ENCODE measurements at regions of chr19 and their contacts with region 1.

Region 1: GRCh38 chr19:7348587-7349230 is at the start of gene ARHGEF18:
- DNase-seq: peak; percentile 64
- ATAC-seq: peak; percentile 80
- H3K4me3 Mint-ChIP-seq: peak within 1 kb of the TSS; percentile 90
- H3K27ac Mint-ChIP-seq: peak within 1 kb of the TSS; percentile 95
- H3K4me1 Mint-ChIP-seq: peaks cover 45% of the 10 kb centered on the region
- H3K27me3 Mint-ChIP-seq: no peaks in the 10 kb centered on the region
- total RNA-seq, gene ARHGEF18: 48.9 to 51.3 TPM

Region 2: GRCh38 chr19:7098701-7099596 is 249.8 kb before region 1 on chr19:
- POLR2A ChIA-PET with region 1: interaction called, 14 read pairs
- DNase-seq: peak; percentile 91
- ATAC-seq: peak; percentile 94
- H3K4me3 Mint-ChIP-seq: peak overlapping the region; percentile 85
- H3K27ac Mint-ChIP-seq: peak overlapping the region; percentile 91
- H3K4me1 Mint-ChIP-seq: peaks cover 19% of the 10 kb centered on the region
- H3K27me3 Mint-ChIP-seq: no peaks in the 10 kb centered on the region

Region 3: GRCh38 chr19:7280940-7281666 is 67.6 kb before region 1 on chr19:
- POLR2A ChIA-PET with region 1: no interaction called
- DNase-seq: no peak
- ATAC-seq: no peak
- H3K4me3 Mint-ChIP-seq: no peak overlapping the region
- H3K27ac Mint-ChIP-seq: no peak overlapping the region
- H3K4me1 Mint-ChIP-seq: no peaks in the 10 kb centered on the region
- H3K27me3 Mint-ChIP-seq: peaks cover 3% of the 10 kb centered on the region

Region 4: DNA sequence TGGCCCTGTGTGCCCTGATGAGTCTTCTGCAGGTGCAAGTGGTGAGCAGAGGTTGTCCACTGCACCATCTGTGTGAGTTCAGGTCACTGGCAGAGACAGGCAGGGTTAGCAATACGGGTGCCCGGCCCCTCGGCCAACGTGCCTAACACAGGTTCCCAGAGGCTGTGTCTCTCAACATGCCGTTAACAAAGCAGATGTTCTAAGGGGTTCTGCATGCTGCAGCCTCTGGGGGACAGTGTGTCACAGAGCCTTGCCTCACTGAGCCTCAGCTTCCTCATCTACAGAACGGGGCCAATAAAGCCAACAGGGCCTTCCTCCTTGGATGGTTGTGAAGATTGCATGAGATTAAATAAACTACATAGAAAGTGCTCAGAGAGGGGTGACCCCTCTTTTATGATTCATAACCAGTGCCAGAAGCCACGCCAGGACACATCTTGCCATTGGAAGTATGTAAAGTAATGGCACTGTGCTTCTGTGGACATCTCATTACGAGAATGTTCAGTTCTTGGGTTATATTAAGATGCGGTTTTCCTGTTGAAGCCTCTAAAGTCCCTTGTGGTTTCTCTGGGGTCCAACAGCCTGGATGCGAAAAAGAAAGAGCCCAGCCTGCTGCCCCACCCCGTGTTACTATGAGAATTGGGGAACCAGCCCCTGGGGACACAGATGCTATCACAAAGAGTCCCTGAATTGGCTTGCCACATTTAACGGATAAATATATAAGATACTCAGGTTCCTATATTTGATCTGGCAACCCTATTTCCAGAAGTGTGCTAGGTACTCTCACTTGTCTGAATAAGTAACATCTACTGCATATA is 11.1 kb before region 1 on chr19:
- POLR2A ChIA-PET with region 1: interaction called, 10 read pairs
- DNase-seq: peak; percentile 40
- ATAC-seq: peak; percentile 57
- H3K4me3 Mint-ChIP-seq: peak overlapping the region; percentile 63
- H3K27ac Mint-ChIP-seq: peak overlapping the region; percentile 40
- H3K4me1 Mint-ChIP-seq: peaks cover 21% of the 10 kb centered on the region
- H3K27me3 Mint-ChIP-seq: peaks cover 8% of the 10 kb centered on the region

Measured in activated naive CD8-positive, alpha-beta T cell treated with anti-CD3 and anti-CD28 coated beads, Interleukin-2, amount 10 ng/mL, durations not matched to agents 7 days and 5 days (primary cell).